ENCODE measurements at regions of chr11 and their contacts with region 1.

Region 1: DNA sequence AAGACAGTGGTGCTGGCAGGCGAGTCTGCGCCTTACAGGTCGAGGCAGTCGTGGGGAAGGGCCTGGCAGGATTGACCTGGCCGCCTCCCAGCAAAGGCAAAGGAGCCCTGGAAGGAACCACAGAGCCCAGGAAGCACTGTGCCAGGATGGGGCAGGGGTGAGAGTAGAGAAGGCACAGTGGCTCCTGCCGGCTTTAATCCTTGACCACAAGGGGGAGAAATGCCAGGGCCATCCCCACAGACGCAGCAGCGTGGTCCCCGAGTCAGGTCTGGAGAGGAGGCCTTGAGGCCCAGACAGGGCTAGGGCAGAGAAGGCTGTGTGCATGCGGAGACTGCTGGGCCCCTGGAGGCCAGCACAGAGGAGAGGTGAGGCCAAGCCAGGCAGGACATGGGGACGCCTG is 9.9 kb upstream of the NDUFS8 start:
- DNase-seq: peak; percentile 70 to 83
- ATAC-seq: peak; percentile 53 to 67
- H3K4me3 ChIP-seq: no peak overlapping the region
- H3K27ac ChIP-seq: peak overlapping the region; percentile 99 to 100
- H3K4me1 ChIP-seq: peaks cover 64% of the 10 kb centered on the region
- CTCF ChIP-seq: peak; percentile 44
- EP300 ChIP-seq: no peak
- POLR2A ChIP-seq: no peak
- RAD21 ChIP-seq: peak; percentile 30 to 48; a peak in 4 of 5 replicates

Region 2: DNA sequence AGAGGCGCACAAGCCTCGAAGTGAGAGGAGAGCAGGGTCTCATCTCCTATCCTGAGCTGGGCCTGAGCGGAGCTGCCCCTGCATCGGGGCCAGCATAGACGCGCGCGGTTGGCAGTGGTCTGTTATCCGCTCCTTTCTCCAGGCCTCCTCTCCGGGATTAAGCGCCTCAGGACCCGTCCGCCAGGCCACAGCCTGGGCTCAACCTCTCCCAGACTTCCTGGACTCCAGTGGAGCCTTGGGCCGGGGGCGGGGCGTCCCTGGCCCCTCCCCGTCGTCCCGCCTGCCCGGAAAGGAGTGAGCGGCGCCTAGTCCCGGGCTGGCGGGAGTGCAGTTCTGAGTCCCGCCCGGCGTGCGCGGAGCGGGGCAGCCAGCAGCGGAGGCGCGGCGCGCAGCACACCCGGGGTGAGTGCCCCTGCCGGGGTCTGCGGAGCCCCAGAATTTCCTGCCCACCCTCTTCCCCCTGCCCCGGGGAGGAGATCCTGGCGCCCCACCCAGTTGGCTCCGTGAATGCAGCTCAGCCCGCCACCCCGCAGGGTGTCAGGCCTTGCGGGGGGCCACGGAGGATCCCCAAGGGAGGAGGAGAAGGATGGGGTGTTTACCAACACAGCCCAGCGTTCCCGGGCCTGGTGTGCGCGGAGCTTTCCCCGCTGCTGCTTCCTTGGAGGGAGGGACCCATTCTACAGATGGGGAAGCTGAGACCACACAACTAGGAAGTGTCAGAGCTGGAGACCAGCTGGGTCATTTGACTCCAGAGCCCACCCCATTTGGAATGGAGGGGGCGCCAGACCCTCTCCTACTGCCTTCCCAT is 18.3 kb after region 1 on chr11 and contains the start of gene TCIRG1:
- CTCF ChIA-PET with region 1: interaction called, 60 read pairs
- POLR2A ChIA-PET with region 1: interaction called, 3 read pairs
- DNase-seq: peak; percentile 80 to 93
- ATAC-seq: peak; percentile 65 to 86
- H3K4me3 ChIP-seq: peak within 1 kb of the TSS; percentile 60
- H3K27ac ChIP-seq: peak within 1 kb of the TSS; percentile 95 to 96
- H3K4me1 ChIP-seq: peaks cover 51% of the 10 kb centered on the region
- CTCF ChIP-seq: no peak
- EP300 ChIP-seq: no peak
- POLR2A ChIP-seq: peak; percentile 75; the same call in 1 of the 2 replicates
- RAD21 ChIP-seq: no peak
- polyA plus RNA-seq, gene TCIRG1: 36.3 and 49.4 TPM in 2 replicates

Region 3: GRCh38 chr11:68121067-68121899 is 100.7 kb after region 1 on chr11 and contains the start of gene CHKA:
- CTCF ChIA-PET with region 1: no interaction called
- POLR2A ChIA-PET with region 1: no interaction called
- DNase-seq: peak; percentile 84 to 91
- ATAC-seq: peak; percentile 93 to 96
- H3K4me3 ChIP-seq: peak within 1 kb of the TSS; percentile 99
- H3K27ac ChIP-seq: peak within 1 kb of the TSS; percentile 86 to 90
- H3K4me1 ChIP-seq: peaks cover 40% of the 10 kb centered on the region
- CTCF ChIP-seq: no peak
- EP300 ChIP-seq: no peak
- POLR2A ChIP-seq: peak; percentile 71; the same call in 1 of the 2 replicates
- RAD21 ChIP-seq: no peak
- polyA plus RNA-seq, gene CHKA: 19.4 and 21.7 TPM in 2 replicates